ENCODE measurements at regions of chr9 and their contacts with region 1.

Region 1: GRCh38 chr9:126500684-126501382 is 112.9 kb upstream of the LMX1B start:
- DNase-seq: no peak
- H3K4me3 ChIP-seq: no peak overlapping the region
- H3K27me3 ChIP-seq: peaks cover 2% of the 10 kb centered on the region; the same call in 1 of the 2 replicates
- CTCF ChIP-seq: peak; percentile 97

Region 2: DNA sequence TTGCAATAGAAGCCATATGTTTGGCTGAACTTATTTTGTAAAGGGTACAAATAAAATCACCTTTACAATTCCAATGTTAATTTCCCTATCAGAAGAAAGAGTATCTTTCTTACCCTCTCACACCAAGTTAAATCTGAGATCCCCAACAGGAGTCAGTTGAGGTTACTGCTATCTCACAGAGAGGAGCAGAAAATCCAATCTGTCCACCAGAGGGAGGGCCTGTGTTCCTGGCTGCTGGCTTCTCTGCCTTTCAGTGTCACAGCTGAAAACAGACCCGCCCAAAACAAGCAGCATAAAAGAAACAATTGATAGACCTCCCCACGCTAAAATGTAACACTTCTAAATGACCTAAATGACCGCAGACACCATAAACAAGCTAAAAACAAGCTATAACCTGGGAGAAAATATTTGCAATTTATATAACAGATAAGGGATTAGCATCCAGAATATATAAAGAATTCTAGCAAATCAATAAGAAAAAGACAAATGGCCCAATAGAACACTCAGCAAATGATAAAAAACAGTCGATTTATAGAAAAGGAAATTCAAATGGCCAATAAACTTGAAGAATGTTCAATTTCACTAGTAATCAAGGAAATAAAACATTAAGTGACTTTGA is 198.7 kb before region 1 on chr9:
- CTCF ChIA-PET with region 1: interaction called, 23 read pairs
- POLR2A ChIA-PET with region 1: no interaction called
- DNase-seq: peak; percentile 7
- H3K4me3 ChIP-seq: no peak overlapping the region
- H3K27me3 ChIP-seq: peaks cover 8% of the 10 kb centered on the region
- CTCF ChIP-seq: peak; percentile 88

Region 3: GRCh38 chr9:126514047-126514821 is 13.4 kb after region 1 on chr9:
- CTCF ChIA-PET with region 1: interaction called, 137 read pairs
- POLR2A ChIA-PET with region 1: no interaction called
- DNase-seq: no peak
- H3K4me3 ChIP-seq: no peak overlapping the region
- H3K27me3 ChIP-seq: peaks cover 8% of the 10 kb centered on the region
- CTCF ChIP-seq: 0 out of 2 replicates have a peak, but pooled peaks have one; percentile 6

Region 4: GRCh38 chr9:126558051-126558665 is 57.3 kb after region 1 on chr9:
- CTCF ChIA-PET with region 1: interaction called, 209 read pairs
- POLR2A ChIA-PET with region 1: no interaction called
- DNase-seq: no peak
- H3K4me3 ChIP-seq: no peak overlapping the region
- H3K27me3 ChIP-seq: peaks cover 12% of the 10 kb centered on the region
- CTCF ChIP-seq: peak; percentile 98

Region 5: GRCh38 chr9:126781186-126782052 is 280.6 kb after region 1 on chr9:
- CTCF ChIA-PET with region 1: interaction called, 22 read pairs
- POLR2A ChIA-PET with region 1: no interaction called
- DNase-seq: no peak
- H3K4me3 ChIP-seq: no peak overlapping the region
- H3K27me3 ChIP-seq: peaks cover 9% of the 10 kb centered on the region; the same call in 1 of the 2 replicates
- CTCF ChIP-seq: peak; percentile 91

Measured in BJ (cell line).